Panc1 (cell line): ENCODE measurements at regions of chr19 and their contacts with region 1.

Region 1: DNA sequence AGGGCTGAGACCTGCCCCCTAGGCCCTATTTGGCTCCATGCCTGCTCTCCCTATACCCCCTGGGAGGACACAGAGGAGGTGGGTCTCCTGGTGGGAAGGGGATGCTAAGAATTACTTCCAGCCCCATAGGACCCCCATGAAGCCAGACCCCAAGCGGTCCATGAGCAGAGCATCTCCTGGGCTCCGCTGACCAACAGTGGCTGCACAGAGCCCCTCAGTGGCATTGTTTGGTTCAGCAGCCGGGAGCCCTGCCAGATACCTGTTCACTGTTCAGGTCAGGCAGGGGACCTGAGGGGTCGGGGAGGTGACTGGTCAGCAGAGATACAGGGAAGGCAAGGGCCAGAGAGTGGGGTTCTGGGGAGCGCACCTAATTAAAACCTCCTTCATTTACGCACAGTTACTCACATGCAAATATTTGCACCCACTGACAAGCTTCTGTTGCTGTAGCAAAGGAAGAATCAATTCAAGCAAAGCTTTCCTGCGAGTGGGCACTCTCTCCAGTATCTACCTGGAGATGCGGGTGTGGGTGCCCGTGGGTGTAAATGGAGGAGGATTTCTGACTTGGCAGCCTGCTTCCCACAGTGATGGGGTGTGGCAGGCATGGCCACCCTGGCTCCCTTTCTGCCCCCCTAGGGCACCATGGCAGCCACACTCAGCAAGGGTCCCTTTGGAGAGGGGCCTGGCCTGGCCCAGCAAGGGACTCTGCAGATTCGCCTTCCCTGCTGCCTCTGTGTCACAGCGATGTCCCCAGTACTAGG is 83.5 kb downstream of the CHST8 start:
- DNase-seq: no peak
- ATAC-seq: no peak
- H3K4me3 ChIP-seq: no peak overlapping the region
- H3K27ac ChIP-seq: no peak overlapping the region
- H3K4me1 ChIP-seq: no peaks in the 10 kb centered on the region
- H3K27me3 ChIP-seq: peaks cover 20% of the 10 kb centered on the region
- CTCF ChIP-seq: no peak

Region 2: GRCh38 chr19:33458171-33458633 is 247.1 kb before region 1 on chr19:
- CTCF ChIA-PET with region 1: no interaction called
- POLR2A ChIA-PET with region 1: interaction called, 11 read pairs
- in situ Hi-C with region 1: no loop called
- intact Hi-C with region 1: no loop called
- DNase-seq: no peak
- ATAC-seq: no peak
- H3K4me3 ChIP-seq: no peak overlapping the region
- H3K27ac ChIP-seq: no peak overlapping the region
- H3K4me1 ChIP-seq: no peaks in the 10 kb centered on the region
- H3K27me3 ChIP-seq: no peaks in the 10 kb centered on the region
- CTCF ChIP-seq: no peak

Region 3: GRCh38 chr19:33795370-33796163 is 90.3 kb after region 1 on chr19:
- CTCF ChIA-PET with region 1: no interaction called
- POLR2A ChIA-PET with region 1: no interaction called
- in situ Hi-C with region 1: no loop called
- intact Hi-C with region 1: no loop called
- DNase-seq: no peak
- ATAC-seq: peak; percentile 87
- H3K4me3 ChIP-seq: peak overlapping the region; percentile 70 to 71
- H3K27ac ChIP-seq: peak overlapping the region; percentile 78
- H3K4me1 ChIP-seq: peaks cover 7% of the 10 kb centered on the region; the same call in 1 of the 2 replicates
- H3K27me3 ChIP-seq: no peaks in the 10 kb centered on the region
- CTCF ChIP-seq: peak; percentile 100

Region 4: DNA sequence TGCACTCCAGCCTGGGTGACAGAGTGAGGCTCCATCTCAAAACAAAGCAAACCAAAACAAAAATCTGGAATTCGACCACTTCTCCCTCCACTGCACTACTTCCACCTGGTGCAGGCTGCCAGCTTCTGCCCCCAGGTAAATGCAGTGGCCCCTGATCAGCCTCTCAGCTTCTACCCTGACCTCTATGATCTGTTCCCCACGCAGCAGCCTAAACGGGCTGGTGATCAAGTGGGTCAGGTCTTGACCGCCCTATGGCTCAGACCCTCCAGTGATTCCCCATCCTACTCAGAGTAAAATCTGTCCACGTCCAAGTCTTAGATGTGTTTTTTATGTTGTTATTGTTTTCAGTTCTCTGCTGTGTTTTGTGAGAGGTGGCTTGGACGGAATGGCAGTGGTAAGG is 255.3 kb after region 1 on chr19:
- CTCF ChIA-PET with region 1: no interaction called
- POLR2A ChIA-PET with region 1: no interaction called
- in situ Hi-C with region 1: no loop called
- intact Hi-C with region 1: no loop called
- DNase-seq: no peak
- ATAC-seq: no peak
- H3K4me3 ChIP-seq: no peak overlapping the region
- H3K27ac ChIP-seq: no peak overlapping the region
- H3K4me1 ChIP-seq: no peaks in the 10 kb centered on the region
- H3K27me3 ChIP-seq: no peaks in the 10 kb centered on the region
- CTCF ChIP-seq: no peak